Posterior cingulate gyrus (tissue), 11 donors: ENCODE measurements at regions of chr19 and their contacts with region 1.

Region 1: DNA sequence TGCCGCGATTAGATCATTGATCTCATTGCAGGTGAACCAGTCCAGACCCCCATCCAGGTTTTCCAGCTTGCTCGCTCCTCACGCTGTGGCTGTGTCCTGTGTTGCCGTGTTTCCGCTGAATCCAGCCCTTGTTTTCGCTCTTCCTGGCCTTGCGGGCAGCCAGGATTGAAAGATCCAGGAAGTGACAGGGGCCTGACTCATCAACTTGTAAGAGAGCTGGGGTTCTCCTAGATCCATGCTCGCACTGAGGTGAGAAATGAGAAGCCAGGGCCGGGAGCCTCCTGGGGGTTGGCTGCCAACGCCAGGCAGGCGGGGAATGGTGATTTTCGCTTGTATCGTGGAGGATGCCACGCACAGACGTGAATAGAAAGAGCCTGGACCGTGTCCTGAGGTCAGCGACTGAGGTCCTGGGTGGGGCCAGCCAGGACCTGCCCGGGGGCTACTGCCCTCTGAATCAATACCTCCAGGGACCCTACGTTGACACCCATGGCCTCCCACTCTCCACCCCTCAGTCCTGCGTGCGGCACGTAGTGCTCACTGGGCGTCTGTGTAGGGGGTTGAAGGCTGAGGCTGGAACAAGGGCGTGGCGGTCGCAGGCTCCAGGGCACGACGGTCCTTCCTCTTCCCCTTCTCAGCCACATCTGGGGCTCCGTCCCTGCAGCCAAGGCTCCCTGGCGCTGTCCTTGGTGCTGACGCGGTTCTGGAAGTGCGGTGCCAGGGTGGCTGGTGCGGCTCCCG is 7.3 kb upstream of the PTPRH start:
- DNase-seq: peak; percentile 67 to 98 (median 84)

Region 2: DNA sequence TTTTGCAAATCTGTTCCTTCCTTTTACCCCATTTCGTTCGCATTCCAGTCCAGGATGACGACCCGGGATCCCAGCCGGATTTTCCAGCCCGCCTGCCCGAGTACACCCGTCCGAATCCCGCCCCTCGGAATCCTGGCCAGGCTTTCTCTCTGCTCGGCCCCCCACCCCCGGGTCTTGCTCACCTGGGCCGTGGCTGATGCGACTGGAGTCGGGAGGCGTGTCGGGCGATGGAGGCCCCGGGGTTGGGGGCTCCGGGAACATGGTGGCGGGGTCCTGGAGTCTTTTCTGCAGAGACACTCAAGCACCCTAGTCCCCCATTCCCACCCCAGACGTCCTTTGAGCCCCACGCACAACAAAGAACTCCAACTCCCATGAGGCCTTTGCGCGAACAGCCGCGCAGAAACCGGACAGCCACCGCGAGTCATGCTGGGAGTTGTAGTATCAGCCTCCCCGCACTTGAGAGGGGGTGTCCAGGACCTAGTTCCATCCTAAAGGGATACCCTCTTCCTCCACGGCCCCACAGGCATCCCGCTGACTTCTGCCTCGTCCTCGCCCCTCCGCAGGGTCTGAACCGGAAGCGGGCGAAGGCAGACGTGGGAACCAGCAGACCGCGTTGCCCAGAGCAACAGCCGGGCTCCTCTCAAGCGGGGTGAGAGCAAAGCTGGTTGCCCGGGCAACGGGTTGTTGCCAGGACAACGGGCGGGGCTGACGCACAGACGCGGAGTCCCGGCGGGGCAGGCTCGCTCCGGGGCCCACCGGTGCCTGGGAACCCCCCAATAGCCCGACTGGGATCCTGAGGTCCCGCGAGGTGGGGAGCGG is 37.6 kb before region 1 on chr19:
- intact Hi-C with region 1: loop called (anchors 5 kb)
- DNase-seq: peak; percentile 69 to 99 (median 91)

Region 3: DNA sequence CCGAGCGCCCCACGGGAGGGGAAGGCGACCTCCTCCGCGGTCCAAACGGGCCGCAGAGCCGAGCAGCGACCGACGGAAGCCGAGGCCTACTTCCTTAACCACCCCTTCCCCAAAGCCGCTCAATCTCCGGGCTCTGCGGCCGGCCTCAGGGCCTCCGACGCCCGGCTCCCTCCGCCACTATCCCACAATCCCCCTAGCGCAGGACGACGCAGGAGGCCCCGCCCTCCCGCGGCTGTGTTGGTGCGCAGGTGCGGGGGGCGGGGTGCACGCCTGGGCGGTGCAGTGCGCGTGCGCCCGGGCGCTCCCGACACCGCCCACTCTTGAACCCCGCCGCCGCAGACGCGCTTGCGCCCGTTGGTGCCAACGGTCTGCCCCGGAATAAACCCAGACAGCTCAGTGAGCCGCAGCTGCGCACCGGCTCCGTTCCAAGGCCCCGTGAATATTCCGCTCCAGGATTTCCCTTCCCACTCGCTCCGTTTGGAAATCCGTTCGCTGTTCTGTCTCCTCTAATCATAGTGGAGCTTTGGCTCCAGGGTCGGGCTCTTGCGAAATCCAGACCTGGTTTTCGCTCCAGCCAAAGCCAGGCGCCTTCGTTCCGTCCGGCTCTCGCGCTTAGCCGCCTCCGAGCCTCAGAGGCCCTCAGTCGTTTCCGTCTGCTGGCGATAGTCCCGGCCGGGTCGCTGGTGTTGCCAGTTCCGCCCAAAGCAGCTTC is 42.4 kb after region 1 on chr19 and contains the start of gene PPP6R1:
- intact Hi-C with region 1: loop called (anchors 2 kb)
- DNase-seq: peak; percentile 94 to 99 (median 96)

Region 4: GRCh38 chr19:55289117-55289796 is 72.6 kb after region 1 on chr19:
- intact Hi-C with region 1: no loop called
- DNase-seq: peak in 2 of 10 donors; percentile 45 to 76